ENCODE measurements at regions of chr18 and their contacts with region 1.

Region 1: GRCh38 chr18:58015065-58015780 is 28.8 kb upstream of the NEDD4L start:
- DNase-seq: no peak
- ATAC-seq: no peak
- H3K4me3 ChIP-seq: no peak overlapping the region
- H3K27ac ChIP-seq: no peak overlapping the region
- H3K4me1 ChIP-seq: peaks cover 40% of the 10 kb centered on the region
- H3K27me3 ChIP-seq: no peaks in the 10 kb centered on the region
- CTCF ChIP-seq: no peak

Region 2: DNA sequence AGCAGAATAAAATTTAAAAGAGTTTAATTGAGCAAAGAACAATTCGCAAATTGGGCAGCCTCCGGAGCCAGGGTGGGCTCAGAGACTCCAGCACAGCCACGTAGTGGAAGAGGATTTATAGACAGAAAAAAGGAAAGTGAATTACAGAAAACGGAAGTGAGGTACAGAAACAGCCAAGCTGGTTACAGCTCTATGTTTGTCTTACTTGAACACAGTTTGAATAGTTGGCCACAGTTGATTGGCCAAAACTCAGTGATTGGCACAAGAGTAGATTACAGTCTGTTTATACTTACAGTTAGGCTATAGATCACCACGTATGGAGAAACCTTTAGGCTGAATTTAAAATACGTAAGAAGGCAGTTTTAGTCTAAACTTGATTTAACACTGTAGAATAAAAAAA is 50.0 kb before region 1 on chr18:
- CTCF ChIA-PET with region 1: no interaction called
- POLR2A ChIA-PET with region 1: no interaction called
- intact Hi-C with region 1: loop called (anchors 10 kb)
- DNase-seq: no peak
- ATAC-seq: no peak
- H3K4me3 ChIP-seq: no peak overlapping the region
- H3K27ac ChIP-seq: no peak overlapping the region
- H3K4me1 ChIP-seq: peaks cover 7% of the 10 kb centered on the region; the same call in 1 of the 2 replicates
- H3K27me3 ChIP-seq: no peaks in the 10 kb centered on the region
- CTCF ChIP-seq: no peak